GM13976 (cell line): ENCODE measurements at regions of chr14 and their contacts with region 1.

Region 1: DNA sequence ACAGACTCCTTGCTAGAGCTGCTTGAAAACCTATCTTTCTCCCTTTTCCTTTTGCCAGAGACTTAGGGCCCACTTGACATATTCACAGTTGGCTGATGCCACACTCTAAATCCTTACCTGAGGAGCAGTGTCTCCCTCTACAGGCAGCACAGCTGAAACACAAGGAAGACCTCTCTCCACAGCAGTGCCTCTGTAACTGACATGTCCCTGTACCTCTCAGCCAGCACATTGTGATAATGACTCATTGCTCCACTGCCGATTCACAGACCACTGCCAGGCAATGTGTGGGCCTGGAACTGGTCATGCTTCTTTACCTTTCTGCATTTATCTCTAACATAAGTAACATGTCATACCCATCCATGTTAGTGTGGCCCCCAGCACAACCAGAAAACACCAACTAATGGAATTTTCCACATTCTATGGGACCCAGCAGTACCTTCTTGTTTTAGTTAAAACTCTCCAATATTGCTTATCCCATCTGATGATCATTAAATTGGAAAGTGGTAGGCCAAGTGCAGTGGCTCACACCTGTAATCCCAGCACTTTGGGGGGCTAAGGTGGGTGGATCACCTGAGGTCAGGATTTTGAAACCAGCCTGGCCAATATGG is 56.5 kb downstream of the GTF2A1 start:
- DNase-seq: peak; percentile 55
- CTCF ChIP-seq: peak; percentile 74

Region 2: DNA sequence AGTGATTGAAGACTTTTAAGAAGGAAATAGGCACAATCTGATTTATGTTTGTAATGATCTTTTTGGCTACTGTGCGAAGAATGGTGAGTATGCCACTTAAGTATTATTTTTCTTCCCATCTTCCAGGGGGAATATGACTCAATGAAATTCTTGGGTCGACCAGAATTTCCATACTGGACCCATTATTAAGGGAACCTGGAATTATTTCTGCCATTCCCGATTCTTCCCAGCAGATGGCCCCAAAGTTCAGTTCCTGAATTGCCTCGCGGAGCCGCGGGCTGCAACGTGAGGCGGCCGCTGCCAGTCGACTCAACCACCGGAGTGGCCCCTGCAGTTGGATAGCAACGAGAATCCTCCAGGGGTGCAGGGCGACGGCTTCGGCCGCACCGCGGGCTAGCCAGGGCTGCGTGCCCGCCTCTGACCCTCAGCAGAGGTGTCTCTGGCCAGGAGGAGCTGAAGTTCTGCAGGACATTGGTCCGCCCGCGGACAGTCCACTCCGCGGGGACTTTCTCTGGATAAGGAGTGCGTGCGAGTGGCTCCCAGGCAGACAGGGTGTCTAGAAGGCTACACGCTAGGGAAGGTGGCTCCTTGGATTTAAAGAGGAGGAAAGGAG is 209.5 kb before region 1 on chr14:
- in situ Hi-C with region 1: loop called (anchors 10 kb)
- DNase-seq: peak; percentile 83
- CTCF ChIP-seq: peak; percentile 71

Region 3: GRCh38 chr14:80996049-80996901 is 168.0 kb before region 1 on chr14:
- in situ Hi-C with region 1: loop called (anchors 10 kb)
- DNase-seq: peak; percentile 51
- CTCF ChIP-seq: peak; percentile 57